Psoas muscle (tissue), 8 donors: ENCODE measurements at regions of chr1 and their contacts with region 1.

Region 1: GRCh38 chr1:169106095-169106920 is at the start of gene ATP1B1:
- DNase-seq: peak; percentile 89 to 95
- ATAC-seq: peak; percentile 74 to 85 (median 80)
- H3K4me3 ChIP-seq: peak within 1 kb of the TSS; percentile 100
- H3K27ac ChIP-seq: peak within 1 kb of the TSS; percentile 96
- H3K4me1 ChIP-seq: peaks cover 24% of the 10 kb centered on the region
- H3K27me3 ChIP-seq: no peaks in the 10 kb centered on the region
- CTCF ChIP-seq: peak; percentile 63
- total RNA-seq, gene ATP1B1: 290 to 1,098 (median 779) TPM

Region 2: GRCh38 chr1:168466092-168466713 is 640.1 kb before region 1 on chr1:
- intact Hi-C with region 1: loop called in 1 of 2 experiments (anchors 10 kb)
- DNase-seq: peak; percentile 16 to 52
- ATAC-seq: peak in 3 of 4 donors; percentile 49 to 57 (median 55)
- H3K4me3 ChIP-seq: no peak overlapping the region
- H3K27ac ChIP-seq: peak overlapping the region; percentile 54
- H3K4me1 ChIP-seq: peaks cover 40% of the 10 kb centered on the region
- H3K27me3 ChIP-seq: no peaks in the 10 kb centered on the region
- CTCF ChIP-seq: no peak

Region 3: GRCh38 chr1:168504064-168504837 is 602.1 kb before region 1 on chr1:
- intact Hi-C with region 1: no loop called
- DNase-seq: peak; percentile 55 to 75
- ATAC-seq: peak; percentile 49 to 86 (median 66)
- H3K4me3 ChIP-seq: no peak overlapping the region
- H3K27ac ChIP-seq: no peak overlapping the region
- H3K4me1 ChIP-seq: no peaks in the 10 kb centered on the region
- H3K27me3 ChIP-seq: no peaks in the 10 kb centered on the region
- CTCF ChIP-seq: no peak

Region 4: DNA sequence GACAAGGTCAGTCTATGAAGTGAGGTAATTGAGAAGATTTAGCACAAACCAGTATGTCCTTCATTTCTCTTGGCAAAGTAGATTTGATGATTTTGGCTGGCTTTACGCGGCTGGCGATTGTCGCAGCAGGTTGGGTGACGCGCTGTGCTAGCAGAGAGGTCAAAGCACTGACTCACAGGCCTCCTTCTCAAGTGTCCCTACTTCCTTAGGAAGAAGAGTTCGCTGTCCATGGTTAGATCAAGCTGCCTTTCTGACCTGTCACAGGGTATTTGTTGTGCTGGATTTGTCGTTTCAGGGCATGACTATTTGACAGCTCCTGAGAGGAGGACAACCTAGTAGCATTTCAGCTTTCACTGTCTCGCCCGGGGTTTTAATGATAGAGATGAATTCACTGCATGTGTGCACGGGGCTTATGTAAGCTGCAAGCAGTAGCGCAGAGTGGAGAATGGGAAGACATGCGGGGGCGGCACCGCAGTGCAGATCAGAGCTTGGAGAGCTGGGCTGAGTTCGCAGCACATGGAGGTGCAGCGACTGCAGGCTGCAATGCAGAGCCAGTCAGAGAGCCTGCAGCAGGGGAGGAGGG is 497.1 kb before region 1 on chr1:
- intact Hi-C with region 1: loop called (anchors 2 to 5 kb)
- DNase-seq: peak; percentile 76 to 88
- ATAC-seq: peak; percentile 81 to 82 (median 82)
- H3K4me3 ChIP-seq: peak overlapping the region; percentile 53
- H3K27ac ChIP-seq: peak overlapping the region; percentile 94
- H3K4me1 ChIP-seq: peaks cover 74% of the 10 kb centered on the region
- H3K27me3 ChIP-seq: no peaks in the 10 kb centered on the region
- CTCF ChIP-seq: no peak

Region 5: GRCh38 chr1:168623003-168623828 is 483.1 kb before region 1 on chr1:
- intact Hi-C with region 1: loop called in 1 of 2 experiments (anchors 5 kb)
- DNase-seq: peak; percentile 56 to 78
- ATAC-seq: peak; percentile 89 to 92 (median 90)
- H3K4me3 ChIP-seq: peak overlapping the region; percentile 41
- H3K27ac ChIP-seq: peak overlapping the region; percentile 94
- H3K4me1 ChIP-seq: peaks cover 51% of the 10 kb centered on the region
- H3K27me3 ChIP-seq: no peaks in the 10 kb centered on the region
- CTCF ChIP-seq: peak; percentile 20

Region 6: GRCh38 chr1:168637350-168637991 is 468.8 kb before region 1 on chr1:
- intact Hi-C with region 1: loop called in 1 of 2 experiments (anchors 2 kb)
- DNase-seq: no peak
- ATAC-seq: peak; percentile 79 to 85 (median 82)
- H3K4me3 ChIP-seq: peak overlapping the region; percentile 15
- H3K27ac ChIP-seq: peak overlapping the region; percentile 94
- H3K4me1 ChIP-seq: peaks cover 15% of the 10 kb centered on the region
- H3K27me3 ChIP-seq: no peaks in the 10 kb centered on the region
- CTCF ChIP-seq: peak; percentile 76

Region 7: DNA sequence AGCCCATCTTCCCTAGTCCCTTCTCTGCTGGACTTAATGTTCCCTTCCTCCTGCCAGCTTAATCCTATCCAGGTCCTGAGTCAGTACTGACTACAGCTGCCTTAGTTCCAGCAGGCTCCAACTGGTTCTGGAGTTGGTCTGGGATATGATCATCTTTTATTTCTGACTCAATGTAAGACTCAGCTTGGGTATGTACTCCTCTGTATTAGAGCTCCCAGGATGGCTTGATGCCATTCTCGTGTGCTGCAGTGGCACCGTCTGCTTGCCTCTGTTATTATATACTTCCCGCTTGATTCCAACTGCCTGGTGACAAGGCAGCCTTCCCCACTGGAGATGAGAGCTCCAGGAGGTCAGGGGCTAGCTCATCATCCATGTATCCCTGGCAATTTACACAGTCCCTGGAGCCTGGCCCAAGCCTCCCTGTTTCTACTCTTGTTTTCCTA is 212.9 kb before region 1 on chr1:
- intact Hi-C with region 1: loop called (anchors 5 to 10 kb)
- DNase-seq: peak; percentile 60 to 84
- ATAC-seq: peak; percentile 96 to 98 (median 97)
- H3K4me3 ChIP-seq: peak overlapping the region; percentile 37
- H3K27ac ChIP-seq: peak overlapping the region; percentile 84
- H3K4me1 ChIP-seq: peaks cover 12% of the 10 kb centered on the region
- H3K27me3 ChIP-seq: no peaks in the 10 kb centered on the region
- CTCF ChIP-seq: no peak

Region 8: GRCh38 chr1:169517586-169518192 is 411.4 kb after region 1 on chr1:
- intact Hi-C with region 1: no loop called
- DNase-seq: no peak
- ATAC-seq: no peak
- H3K4me3 ChIP-seq: no peak overlapping the region
- H3K27ac ChIP-seq: no peak overlapping the region
- H3K4me1 ChIP-seq: no peaks in the 10 kb centered on the region
- H3K27me3 ChIP-seq: no peaks in the 10 kb centered on the region
- CTCF ChIP-seq: no peak